ENCODE measurements at regions of chr3 and their contacts with region 1.

Region 1: GRCh38 chr3:65352951-65353350 is 665.2 kb upstream of the ADAMTS9 start:
- DNase-seq: no peak
- H3K4me3 ChIP-seq: no peak overlapping the region
- H3K27ac ChIP-seq: no peak overlapping the region
- H3K4me1 ChIP-seq: peaks cover 0 to 9% (median 5%) of the 10 kb centered on the region in 4 donors
- H3K27me3 ChIP-seq: no peaks in the 10 kb centered on the region
- CTCF ChIP-seq: no peak
- EP300 ChIP-seq: no peak
- POLR2A ChIP-seq: no peak

Region 2: GRCh38 chr3:64732576-64732975 is 620.4 kb before region 1 on chr3:
- intact Hi-C with region 1: loop called (anchors 5 kb)
- DNase-seq: no peak
- H3K4me3 ChIP-seq: no peak overlapping the region
- H3K27ac ChIP-seq: no peak overlapping the region
- H3K4me1 ChIP-seq: peaks cover 0 to 19% (median 13%) of the 10 kb centered on the region in 4 donors
- H3K27me3 ChIP-seq: no peaks in the 10 kb centered on the region
- CTCF ChIP-seq: no peak
- EP300 ChIP-seq: no peak
- POLR2A ChIP-seq: no peak

Region 3: GRCh38 chr3:65318231-65318630 is 34.7 kb before region 1 on chr3:
- intact Hi-C with region 1: no loop called
- DNase-seq: no peak
- H3K4me3 ChIP-seq: no peak overlapping the region
- H3K27ac ChIP-seq: no peak overlapping the region
- H3K4me1 ChIP-seq: no peaks in the 10 kb centered on the region
- H3K27me3 ChIP-seq: no peaks in the 10 kb centered on the region
- CTCF ChIP-seq: no peak
- EP300 ChIP-seq: no peak
- POLR2A ChIP-seq: no peak

Region 4: DNA sequence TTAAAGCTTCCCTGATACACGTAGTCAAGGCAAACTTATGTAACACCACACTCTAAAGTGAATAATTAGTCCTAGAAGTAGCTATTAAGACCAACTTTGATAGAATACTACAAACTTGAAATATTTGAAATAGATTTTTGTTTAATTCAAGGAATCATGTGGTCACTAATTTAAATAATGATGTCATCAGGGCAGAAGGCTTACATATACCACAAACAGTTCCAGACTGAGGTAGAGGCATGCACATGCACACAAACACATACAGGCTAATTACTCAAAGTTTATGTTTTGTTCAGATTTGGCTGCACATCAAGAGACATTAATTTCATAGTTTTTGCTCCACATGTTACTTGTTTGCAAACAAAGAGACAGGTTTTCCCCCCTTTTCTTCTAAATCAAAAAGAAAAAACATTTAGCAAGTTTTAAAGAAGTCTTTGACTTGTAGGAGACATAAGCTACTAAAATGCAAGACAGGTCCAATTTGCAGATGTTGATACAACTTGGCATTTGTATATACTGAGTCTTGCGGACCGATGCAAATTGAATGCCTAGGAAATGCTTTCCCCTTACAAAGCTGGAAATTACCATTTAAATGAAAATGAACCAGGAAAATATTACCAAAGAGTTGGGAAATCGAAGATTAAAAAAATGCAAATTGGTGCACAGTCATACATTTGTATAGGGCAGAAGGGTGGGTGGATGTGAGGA is 90.9 kb after region 1 on chr3:
- intact Hi-C with region 1: no loop called
- DNase-seq: no peak
- H3K4me3 ChIP-seq: no peak overlapping the region
- H3K27ac ChIP-seq: no peak overlapping the region
- H3K4me1 ChIP-seq: peaks cover 0 to 6% (median 4%) of the 10 kb centered on the region in 4 donors
- H3K27me3 ChIP-seq: no peaks in the 10 kb centered on the region
- CTCF ChIP-seq: no peak
- EP300 ChIP-seq: no peak
- POLR2A ChIP-seq: no peak